Heart right ventricle (tissue), 16 donors: ENCODE measurements at regions of chr14 and their contacts with region 1.

Region 1: GRCh38 chr14:53055003-53055402 is 98.1 kb downstream of the DDHD1 start:
- DNase-seq: no peak
- ATAC-seq: peak; percentile 44 to 80 (median 68)
- H3K4me3 ChIP-seq: no peak overlapping the region
- H3K27ac ChIP-seq: peak overlapping the region in 1 of 10 donors; percentile 5
- H3K4me1 ChIP-seq: peaks cover 0 to 8% (median 0%) of the 10 kb centered on the region in 9 donors
- H3K27me3 ChIP-seq: no peaks in the 10 kb centered on the region
- CTCF ChIP-seq: peak; percentile 58 to 86 (median 79)

Region 2: GRCh38 chr14:52824507-52824906 is 230.5 kb before region 1 on chr14:
- intact Hi-C with region 1: loop called in 9 of 10 experiments (anchors 2 to 10 kb)
- DNase-seq: no peak
- ATAC-seq: no peak
- H3K4me3 ChIP-seq: no peak overlapping the region
- H3K27ac ChIP-seq: no peak overlapping the region
- H3K4me1 ChIP-seq: peaks cover 0 to 9% (median 0%) of the 10 kb centered on the region in 9 donors
- H3K27me3 ChIP-seq: no peaks in the 10 kb centered on the region
- CTCF ChIP-seq: no peak

Region 3: GRCh38 chr14:52961060-52961639 is 93.9 kb before region 1 on chr14:
- intact Hi-C with region 1: loop called in 5 of 10 experiments (anchors 5 kb)
- DNase-seq: peak; percentile 25 to 65
- ATAC-seq: peak; percentile 84 to 95 (median 94)
- H3K4me3 ChIP-seq: no peak overlapping the region
- H3K27ac ChIP-seq: peak overlapping the region in 9 of 10 donors; percentile 11 to 76 (median 55)
- H3K4me1 ChIP-seq: peaks cover 3 to 21% (median 10%) of the 10 kb centered on the region in 9 donors
- H3K27me3 ChIP-seq: no peaks in the 10 kb centered on the region
- CTCF ChIP-seq: peak; percentile 55 to 77 (median 71)

Region 4: GRCh38 chr14:53004976-53005375 is 50.0 kb before region 1 on chr14:
- intact Hi-C with region 1: loop called in 1 of 10 experiments (anchors 5 kb)
- DNase-seq: no peak
- ATAC-seq: peak in 2 of 8 donors; percentile 34 to 38
- H3K4me3 ChIP-seq: no peak overlapping the region
- H3K27ac ChIP-seq: no peak overlapping the region
- H3K4me1 ChIP-seq: peaks cover 0 to 7% (median 0%) of the 10 kb centered on the region in 9 donors
- H3K27me3 ChIP-seq: no peaks in the 10 kb centered on the region
- CTCF ChIP-seq: no peak

Region 5: DNA sequence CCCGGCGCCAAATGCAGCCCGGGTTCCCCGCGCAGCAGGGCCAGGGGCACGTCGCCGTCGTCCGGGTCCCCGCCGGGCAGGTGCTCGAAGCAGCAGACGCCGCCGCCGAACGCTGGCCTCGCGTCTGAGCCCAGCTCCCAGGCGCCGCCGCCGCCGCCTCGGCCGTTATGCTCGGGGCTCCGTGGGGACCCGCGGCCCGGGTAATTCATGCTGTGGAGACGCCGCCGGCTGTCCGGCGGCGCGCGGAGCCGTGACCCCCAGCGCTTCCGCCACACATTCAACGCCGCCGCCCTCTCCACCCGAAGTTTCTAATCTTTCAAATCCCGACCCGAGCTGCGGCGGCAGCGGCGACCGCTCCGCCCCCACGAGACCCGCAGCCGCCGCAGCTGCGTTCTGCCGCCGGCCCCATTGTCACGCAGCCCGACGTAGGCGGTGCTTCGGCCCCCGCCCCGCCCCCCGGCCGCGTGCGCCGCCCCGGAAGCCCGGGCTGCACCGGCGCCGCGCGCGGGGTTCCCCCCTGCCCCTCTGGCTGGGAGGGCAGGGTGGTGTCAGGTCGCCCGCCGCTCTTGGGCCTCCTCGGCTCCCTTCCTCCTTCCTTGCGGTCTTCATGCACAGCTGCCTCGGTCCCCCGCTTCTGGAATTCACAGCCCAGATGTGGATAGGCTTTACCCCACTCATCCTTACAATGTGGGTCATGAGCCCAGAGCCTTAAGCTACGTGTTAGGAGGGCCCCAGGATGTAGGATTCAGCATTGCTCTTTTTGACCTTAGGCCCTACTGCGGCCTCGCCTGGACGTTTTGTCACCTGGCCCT is 98.1 kb after region 1 on chr14 and contains the start of gene DDHD1:
- intact Hi-C with region 1: no loop called
- DNase-seq: peak; percentile 60 to 85
- ATAC-seq: peak; percentile 90 to 97 (median 93)
- H3K4me3 ChIP-seq: peak within 1 kb of the TSS; percentile 61 to 95 (median 80)
- H3K27ac ChIP-seq: peak within 1 kb of the TSS; percentile 37 to 95 (median 90)
- H3K4me1 ChIP-seq: peaks cover 0 to 39% (median 19%) of the 10 kb centered on the region in 9 donors
- H3K27me3 ChIP-seq: no peaks in the 10 kb centered on the region
- CTCF ChIP-seq: no peak
- total RNA-seq, gene DDHD1: 6.0 to 9.6 (median 7.6) TPM

Region 6: GRCh38 chr14:53306267-53306721 is 251.3 kb after region 1 on chr14:
- intact Hi-C with region 1: loop called in 1 of 10 experiments (anchors 5 kb)
- DNase-seq: peak; percentile 44 to 67
- ATAC-seq: peak in 7 of 8 donors; percentile 70 to 87 (median 85)
- H3K4me3 ChIP-seq: peak overlapping the region in 9 of 10 donors; percentile 25 to 56 (median 42)
- H3K27ac ChIP-seq: peak overlapping the region in 8 of 10 donors; percentile 35 to 64 (median 40)
- H3K4me1 ChIP-seq: peaks cover 0 to 25% (median 5%) of the 10 kb centered on the region in 9 donors
- H3K27me3 ChIP-seq: no peaks in the 10 kb centered on the region
- CTCF ChIP-seq: peak; percentile 51 to 90 (median 82)